Dorsolateral prefrontal cortex (tissue), 120 donors: ENCODE measurements at regions of chr13 and their contacts with region 1.

Region 1: GRCh38 chr13:101757446-101758039 is 305.1 kb downstream of the ITGBL1 start:
- DNase-seq: no peak
- H3K4me3 ChIP-seq: no peak overlapping the region
- H3K27ac ChIP-seq: no peak overlapping the region
- H3K27me3 ChIP-seq: no peaks in the 10 kb centered on the region
- CTCF ChIP-seq: peak; percentile 24 to 77 (median 58)

Region 2: GRCh38 chr13:101514788-101515187 is 242.8 kb before region 1 on chr13:
- intact Hi-C with region 1: loop called (anchors 2 to 5 kb)
- DNase-seq: peak in 2 of 10 donors; percentile 23 to 28
- H3K4me3 ChIP-seq: no peak overlapping the region
- H3K27ac ChIP-seq: no peak overlapping the region
- H3K27me3 ChIP-seq: no peaks in the 10 kb centered on the region
- CTCF ChIP-seq: peak; percentile 71 to 94 (median 83)